CD8-positive, alpha-beta memory T cell (primary cell): ENCODE measurements at regions of chr4 and their contacts with region 1.

Region 1: DNA sequence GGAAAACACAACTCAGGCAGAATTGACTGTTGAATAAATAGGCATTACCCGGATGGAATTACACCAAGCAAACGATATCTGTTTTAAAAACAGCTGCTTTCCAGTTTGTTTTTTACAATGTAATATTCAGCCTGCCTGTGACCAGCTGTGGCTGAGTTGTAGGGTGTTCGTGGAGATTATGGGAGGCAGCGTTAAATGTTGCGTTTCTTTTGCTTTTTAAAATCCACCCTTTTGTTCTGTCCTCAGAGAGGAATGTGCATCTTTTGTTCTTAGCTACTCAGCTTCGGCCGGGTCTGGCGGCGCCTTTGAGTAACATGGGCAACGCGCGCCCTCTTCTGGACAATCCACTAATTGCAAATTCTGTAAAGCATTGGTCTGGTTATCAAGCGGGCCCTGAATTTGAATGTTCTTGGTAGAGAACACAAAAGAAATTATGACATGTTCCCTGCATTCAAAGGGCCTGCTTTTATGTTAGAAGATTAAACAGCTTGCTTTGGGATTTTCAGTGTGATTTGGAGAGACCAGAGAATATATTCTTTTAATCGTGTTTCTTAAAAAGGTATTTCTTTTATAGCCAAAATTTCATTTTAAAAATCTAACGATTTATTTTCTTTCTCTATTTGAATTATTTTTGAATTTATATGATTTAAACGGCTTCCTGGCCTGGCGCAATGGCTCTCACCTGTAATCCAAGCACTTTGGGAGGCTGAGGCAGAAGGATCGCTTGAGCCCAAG is 76.3 kb upstream of the TRIM2 start:
- DNase-seq: peak; percentile 71 to 83 (median 75)
- H3K4me3 ChIP-seq: no peak overlapping the region
- H3K4me3 Mint-ChIP-seq: no peak overlapping the region
- H3K27ac ChIP-seq: no peak overlapping the region
- H3K27ac Mint-ChIP-seq: peak overlapping the region in 2 of 8 donors; percentile 8 to 71
- H3K4me1 ChIP-seq: no peaks in the 10 kb centered on the region
- H3K4me1 Mint-ChIP-seq: peaks cover 2 to 5% (median 5%) of the 10 kb centered on the region in 3 donors
- H3K27me3 ChIP-seq: no peaks in the 10 kb centered on the region
- H3K27me3 Mint-ChIP-seq: no peaks in the 10 kb centered on the region

Region 2: DNA sequence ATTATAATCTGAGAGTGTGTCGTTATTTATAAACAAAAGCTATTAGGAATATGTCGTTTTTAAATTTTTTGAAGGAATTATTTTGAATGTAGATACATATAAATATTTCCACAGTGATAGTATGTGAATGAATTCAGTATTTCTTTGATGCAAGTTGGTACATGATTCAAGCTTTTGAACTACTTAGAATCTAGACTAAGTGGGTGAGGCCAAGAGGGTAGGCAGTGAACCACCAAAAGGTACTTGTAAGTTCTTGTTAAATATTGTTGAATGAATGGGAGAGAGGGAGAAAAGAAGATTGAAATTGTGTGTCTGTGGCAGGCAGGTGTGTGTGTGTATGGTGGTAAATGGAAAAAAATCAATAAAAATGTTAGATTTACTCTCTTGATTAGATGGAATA is 278.6 kb before region 1 on chr4:
- CTCF ChIA-PET with region 1: interaction called, 22 read pairs
- POLR2A ChIA-PET with region 1: no interaction called
- DNase-seq: no peak
- H3K4me3 ChIP-seq: no peak overlapping the region
- H3K4me3 Mint-ChIP-seq: no peak overlapping the region
- H3K27ac ChIP-seq: no peak overlapping the region
- H3K27ac Mint-ChIP-seq: peak overlapping the region in 3 of 8 donors; percentile 4 to 74 (median 20)
- H3K4me1 ChIP-seq: peaks cover 12% of the 10 kb centered on the region
- H3K4me1 Mint-ChIP-seq: peaks cover 14 to 28% (median 19%) of the 10 kb centered on the region in 3 donors
- H3K27me3 ChIP-seq: no peaks in the 10 kb centered on the region
- H3K27me3 Mint-ChIP-seq: peaks cover 0 to 1% of the 10 kb centered on the region in 2 donors

Region 3: DNA sequence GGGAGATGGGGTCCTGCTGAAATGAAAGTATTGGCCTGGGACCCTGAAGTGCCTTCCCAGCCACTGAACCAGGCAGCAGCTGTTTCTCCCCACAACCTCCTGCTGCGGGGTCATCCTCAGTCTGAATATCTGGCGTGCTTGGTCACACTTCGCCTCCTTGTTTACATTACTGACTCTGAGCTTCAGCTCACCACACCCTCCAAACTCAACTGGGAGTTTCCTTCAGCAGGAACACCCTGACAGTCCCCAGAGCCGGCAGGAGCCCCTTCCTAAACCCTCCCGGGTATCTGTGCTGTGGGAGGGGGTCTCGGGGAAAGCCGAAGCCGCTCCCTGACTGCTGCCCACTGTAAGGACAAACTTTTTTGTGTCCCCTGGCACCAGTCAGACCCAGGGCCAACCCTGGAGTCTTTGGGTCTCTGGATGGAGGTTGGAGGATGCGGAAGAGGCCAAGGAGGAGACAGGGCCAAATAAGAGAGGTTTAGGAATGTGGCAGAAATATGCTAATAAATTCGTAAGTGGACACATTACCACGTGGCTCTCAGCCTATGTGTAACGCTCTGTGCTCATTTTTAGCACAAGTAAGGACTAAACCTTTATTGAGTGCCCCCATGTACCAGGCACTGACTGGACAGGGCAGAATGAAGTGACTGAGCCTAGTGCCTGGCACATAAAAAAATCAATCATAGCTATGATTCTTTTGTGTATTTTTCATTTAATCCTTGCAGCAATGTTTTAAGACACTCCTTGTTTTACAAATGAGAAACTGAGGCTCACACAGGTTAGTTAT is 171.1 kb before region 1 on chr4:
- CTCF ChIA-PET with region 1: no interaction called
- POLR2A ChIA-PET with region 1: no interaction called
- DNase-seq: no peak
- H3K4me3 ChIP-seq: no peak overlapping the region
- H3K4me3 Mint-ChIP-seq: no peak overlapping the region
- H3K27ac ChIP-seq: no peak overlapping the region
- H3K27ac Mint-ChIP-seq: peak overlapping the region in 1 of 8 donors; percentile 31
- H3K4me1 ChIP-seq: no peaks in the 10 kb centered on the region
- H3K4me1 Mint-ChIP-seq: peaks cover 0 to 8% (median 5%) of the 10 kb centered on the region in 3 donors
- H3K27me3 ChIP-seq: no peaks in the 10 kb centered on the region
- H3K27me3 Mint-ChIP-seq: peaks cover 4 to 9% of the 10 kb centered on the region in 2 donors

Region 4: GRCh38 chr4:152992047-152992446 is 135.9 kb before region 1 on chr4:
- CTCF ChIA-PET with region 1: no interaction called
- POLR2A ChIA-PET with region 1: no interaction called
- DNase-seq: no peak
- H3K4me3 ChIP-seq: no peak overlapping the region
- H3K4me3 Mint-ChIP-seq: no peak overlapping the region
- H3K27ac ChIP-seq: no peak overlapping the region
- H3K27ac Mint-ChIP-seq: no peak overlapping the region
- H3K4me1 ChIP-seq: no peaks in the 10 kb centered on the region
- H3K4me1 Mint-ChIP-seq: no peaks in the 10 kb centered on the region
- H3K27me3 ChIP-seq: no peaks in the 10 kb centered on the region
- H3K27me3 Mint-ChIP-seq: peaks cover 7 to 13% of the 10 kb centered on the region in 2 donors

Region 5: DNA sequence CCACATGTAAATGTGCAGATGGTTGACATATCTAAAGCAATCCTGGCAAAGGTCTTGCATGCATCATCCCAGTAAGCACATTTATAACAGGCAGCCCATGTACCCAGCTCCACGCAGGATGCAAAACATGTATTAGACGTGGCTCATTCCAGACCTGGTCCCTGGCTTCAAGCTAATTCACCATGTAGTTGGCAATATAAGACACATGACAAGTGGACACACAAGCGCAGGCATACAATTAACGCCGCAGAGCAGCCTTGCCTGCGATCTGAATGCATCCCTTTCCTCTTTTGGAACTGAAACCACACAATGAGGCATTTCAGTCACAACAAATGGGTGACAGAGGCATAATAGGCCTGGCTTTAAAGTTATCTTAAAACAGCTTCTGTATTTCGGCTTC is 38.2 kb before region 1 on chr4:
- CTCF ChIA-PET with region 1: interaction called, 236 read pairs
- POLR2A ChIA-PET with region 1: no interaction called
- DNase-seq: no peak
- H3K4me3 ChIP-seq: no peak overlapping the region
- H3K4me3 Mint-ChIP-seq: no peak overlapping the region
- H3K27ac ChIP-seq: no peak overlapping the region
- H3K27ac Mint-ChIP-seq: no peak overlapping the region
- H3K4me1 ChIP-seq: peaks cover 16% of the 10 kb centered on the region
- H3K4me1 Mint-ChIP-seq: peaks cover 12 to 16% (median 15%) of the 10 kb centered on the region in 3 donors
- H3K27me3 ChIP-seq: no peaks in the 10 kb centered on the region
- H3K27me3 Mint-ChIP-seq: no peaks in the 10 kb centered on the region

Region 6: GRCh38 chr4:153115322-153116290 is 12.3 kb before region 1 on chr4:
- CTCF ChIA-PET with region 1: interaction called, 76 read pairs
- POLR2A ChIA-PET with region 1: interaction called, 4 read pairs
- DNase-seq: peak; percentile 42 to 90 (median 82)
- H3K4me3 ChIP-seq: peak overlapping the region; percentile 45
- H3K4me3 Mint-ChIP-seq: peak overlapping the region in 3 of 7 donors; percentile 29 to 89 (median 76)
- H3K27ac ChIP-seq: peak overlapping the region; percentile 22
- H3K27ac Mint-ChIP-seq: peak overlapping the region in 1 of 8 donors; percentile 93
- H3K4me1 ChIP-seq: peaks cover 61% of the 10 kb centered on the region
- H3K4me1 Mint-ChIP-seq: peaks cover 0 to 6% (median 1%) of the 10 kb centered on the region in 3 donors
- H3K27me3 ChIP-seq: no peaks in the 10 kb centered on the region
- H3K27me3 Mint-ChIP-seq: no peaks in the 10 kb centered on the region